Right ventricle myocardium inferior (tissue), 1 donor: ENCODE measurements at regions of chr7 and their contacts with region 1.

Region 1: GRCh38 chr7:75878769-75879611 is at the start of gene RHBDD2:
- DNase-seq: peak; percentile 98
- ATAC-seq: peak; percentile 98
- total RNA-seq, gene RHBDD2: 16.7 TPM

Region 2: GRCh38 chr7:75951511-75951917 is 72.5 kb after region 1 on chr7:
- intact Hi-C with region 1: no loop called
- DNase-seq: no peak
- ATAC-seq: peak; percentile 66

Region 3: GRCh38 chr7:75966190-75966961 is 87.4 kb after region 1 on chr7:
- intact Hi-C with region 1: loop called (anchors 2 kb)
- DNase-seq: peak; percentile 78
- ATAC-seq: peak; percentile 88